ENCODE measurements at regions of chr20 and their contacts with region 1.

Region 1: GRCh38 chr20:47379433-47380150 is 23.1 kb upstream of the ZMYND8 start:
- DNase-seq: no peak
- H3K4me3 ChIP-seq: no peak overlapping the region
- H3K27ac ChIP-seq: peak overlapping the region in 1 of 2 experiments; percentile 69; a peak in 2 of 4 replicates
- H3K4me1 ChIP-seq: peaks cover 3 to 15% of the 10 kb centered on the region in 2 experiments; a peak in 3 of 4 replicates
- H3K27me3 ChIP-seq: no peaks in the 10 kb centered on the region
- CTCF ChIP-seq: no peak
- EP300 ChIP-seq: peak in 1 of 2 experiments; percentile 88; a peak in 2 of 4 replicates
- RAD21 ChIP-seq: no peak

Region 2: DNA sequence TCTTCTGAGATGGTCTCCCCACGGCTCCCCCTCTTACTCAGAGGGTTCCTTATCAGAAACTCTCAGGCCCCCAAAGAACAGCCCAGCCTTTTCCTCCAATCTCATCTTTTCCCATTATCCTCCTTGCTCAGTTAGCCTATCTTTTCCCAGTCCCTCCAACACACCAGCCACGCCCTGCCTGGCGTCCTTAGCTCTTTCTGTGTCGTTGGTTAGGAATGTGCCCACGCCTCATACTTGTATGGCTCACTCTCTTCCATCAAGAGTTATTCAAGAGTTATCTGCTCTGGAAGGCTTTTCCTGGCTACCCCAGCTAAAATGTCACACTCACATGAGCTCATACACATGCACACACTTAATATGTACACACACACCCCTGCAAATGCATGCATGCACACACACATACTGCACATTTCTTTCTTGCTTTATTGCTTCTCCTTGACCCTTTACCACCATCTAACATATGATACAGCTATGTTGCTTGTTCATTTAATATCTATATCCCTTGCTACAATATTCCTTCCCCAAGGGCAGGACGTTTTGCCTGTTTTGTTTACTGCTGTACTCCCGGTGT is 632.6 kb before region 1 on chr20:
- CTCF ChIA-PET with region 1: interaction called, 18 read pairs
- POLR2A ChIA-PET with region 1: no interaction called
- DNase-seq: no peak
- H3K4me3 ChIP-seq: no peak overlapping the region
- H3K27ac ChIP-seq: no peak overlapping the region
- H3K4me1 ChIP-seq: no peaks in the 10 kb centered on the region
- H3K27me3 ChIP-seq: no peaks in the 10 kb centered on the region
- CTCF ChIP-seq: no peak
- EP300 ChIP-seq: no peak
- RAD21 ChIP-seq: no peak

Region 3: GRCh38 chr20:47196091-47197081 is 183.2 kb before region 1 on chr20:
- CTCF ChIA-PET with region 1: interaction called, 323 read pairs
- POLR2A ChIA-PET with region 1: interaction called, 3 read pairs
- DNase-seq: peak; percentile 83
- H3K4me3 ChIP-seq: no peak overlapping the region; a peak in 1 of 4 replicates
- H3K27ac ChIP-seq: no peak overlapping the region
- H3K4me1 ChIP-seq: peaks cover 0 to 2% of the 10 kb centered on the region in 2 experiments; a peak in 1 of 4 replicates
- H3K27me3 ChIP-seq: no peaks in the 10 kb centered on the region
- CTCF ChIP-seq: peak; percentile 94
- EP300 ChIP-seq: no peak
- RAD21 ChIP-seq: peak; percentile 93

Region 4: DNA sequence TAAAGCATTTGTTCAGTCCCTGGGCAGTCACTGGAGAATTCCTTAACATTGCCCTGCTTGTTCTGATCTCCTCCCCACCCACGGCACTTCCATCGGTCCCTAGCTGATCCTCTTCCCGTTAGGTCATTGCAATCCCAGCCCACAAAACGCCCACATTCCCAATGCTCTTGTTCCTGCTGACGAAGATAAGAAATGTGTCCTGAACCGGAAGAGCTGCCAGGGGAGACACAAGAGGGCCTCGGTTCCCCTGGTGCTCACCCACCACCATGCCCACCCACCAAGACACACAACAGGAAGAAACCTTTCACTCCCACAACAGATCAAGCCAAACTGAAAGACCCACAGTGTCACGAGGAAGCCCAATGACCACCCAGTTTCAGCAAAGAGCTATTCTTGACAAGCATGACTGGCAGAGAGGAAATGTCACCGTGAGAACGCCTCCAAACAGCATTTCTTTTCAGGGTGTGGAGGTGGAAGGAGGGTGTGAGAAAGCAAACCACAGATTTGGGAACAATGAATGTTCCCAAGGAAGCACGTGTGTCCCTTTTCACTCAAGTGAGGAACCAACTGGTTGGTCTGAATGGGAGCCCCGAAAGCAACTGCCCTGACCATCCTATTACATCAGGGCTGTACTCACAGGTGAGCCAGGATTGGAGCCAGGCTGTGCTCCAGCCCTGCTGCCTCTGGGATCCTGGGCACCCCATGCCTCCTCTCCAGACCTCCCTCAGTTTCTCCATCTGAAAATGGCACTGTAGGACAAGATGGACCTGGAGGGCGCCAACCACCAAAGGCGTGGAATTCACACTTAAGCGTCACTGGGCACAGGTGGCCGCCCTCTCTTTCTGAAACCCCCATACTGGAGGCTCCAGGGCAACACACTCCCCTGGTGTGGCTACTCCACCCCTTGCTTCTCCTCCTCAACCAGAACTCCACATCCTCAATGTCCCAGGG is 120.6 kb before region 1 on chr20:
- CTCF ChIA-PET with region 1: interaction called, 38 read pairs
- POLR2A ChIA-PET with region 1: no interaction called
- DNase-seq: no peak
- H3K4me3 ChIP-seq: no peak overlapping the region
- H3K27ac ChIP-seq: no peak overlapping the region; a peak in 1 of 4 replicates
- H3K4me1 ChIP-seq: peaks cover 6 to 21% of the 10 kb centered on the region in 2 experiments; a peak in 3 of 4 replicates
- H3K27me3 ChIP-seq: no peaks in the 10 kb centered on the region
- CTCF ChIP-seq: no peak
- EP300 ChIP-seq: no peak
- RAD21 ChIP-seq: no peak

Region 5: DNA sequence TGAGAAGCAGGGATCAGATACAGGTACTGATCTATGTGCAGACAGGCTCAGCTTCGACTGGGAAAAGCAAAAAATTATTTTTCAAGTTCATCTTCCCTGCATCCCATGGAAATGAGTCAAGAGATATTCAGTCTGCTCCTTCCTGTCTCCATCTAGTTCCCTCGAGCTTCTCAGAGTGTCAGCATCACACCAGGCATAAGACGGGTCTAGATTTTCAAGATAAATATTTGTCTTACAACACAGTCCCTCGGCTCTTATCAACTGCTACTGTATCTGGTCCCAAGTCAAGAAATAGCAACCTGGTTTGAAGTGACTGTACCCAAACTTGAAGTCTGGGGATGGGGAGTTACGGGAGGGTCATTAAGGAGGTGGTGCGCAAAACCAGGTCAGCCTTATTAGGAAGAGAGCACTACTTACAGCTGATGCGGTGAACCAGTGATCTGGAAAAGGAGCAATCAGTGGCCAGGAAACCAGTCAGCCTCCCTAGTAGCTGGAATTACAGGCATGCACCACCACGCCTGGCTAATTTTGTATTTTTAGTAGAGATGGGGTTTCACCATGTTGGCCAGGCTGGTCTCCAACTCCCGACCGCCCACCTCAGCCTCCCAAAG is 52.8 kb before region 1 on chr20:
- CTCF ChIA-PET with region 1: interaction called, 22 read pairs
- POLR2A ChIA-PET with region 1: no interaction called
- DNase-seq: no peak
- H3K4me3 ChIP-seq: no peak overlapping the region
- H3K27ac ChIP-seq: peak overlapping the region; percentile 16 to 93; a peak in 3 of 4 replicates
- H3K4me1 ChIP-seq: peaks cover 17 to 22% of the 10 kb centered on the region in 2 experiments; a peak in 3 of 4 replicates
- H3K27me3 ChIP-seq: no peaks in the 10 kb centered on the region
- CTCF ChIP-seq: no peak
- EP300 ChIP-seq: peak in 1 of 2 experiments; percentile 19; a peak in 1 of 4 replicates
- RAD21 ChIP-seq: no peak

Region 6: GRCh38 chr20:47406849-47407666 is 27.5 kb after region 1 on chr20:
- CTCF ChIA-PET with region 1: interaction called, 10 read pairs
- POLR2A ChIA-PET with region 1: no interaction called
- DNase-seq: no peak
- H3K4me3 ChIP-seq: no peak overlapping the region
- H3K27ac ChIP-seq: no peak overlapping the region
- H3K4me1 ChIP-seq: no peaks in the 10 kb centered on the region
- H3K27me3 ChIP-seq: no peaks in the 10 kb centered on the region
- CTCF ChIP-seq: no peak
- EP300 ChIP-seq: no peak
- RAD21 ChIP-seq: no peak

Region 7: GRCh38 chr20:47620808-47621805 is 241.5 kb after region 1 on chr20:
- CTCF ChIA-PET with region 1: interaction called, 71 read pairs
- POLR2A ChIA-PET with region 1: interaction called, 3 read pairs
- DNase-seq: peak; percentile 39
- H3K4me3 ChIP-seq: peak overlapping the region in 1 of 2 experiments; percentile 28; a peak in 1 of 4 replicates
- H3K27ac ChIP-seq: peak overlapping the region in 1 of 2 experiments; percentile 12; a peak in 1 of 4 replicates
- H3K4me1 ChIP-seq: no peaks in the 10 kb centered on the region; a peak in 1 of 4 replicates
- H3K27me3 ChIP-seq: no peaks in the 10 kb centered on the region
- CTCF ChIP-seq: peak; percentile 96
- EP300 ChIP-seq: no peak
- RAD21 ChIP-seq: peak; percentile 90

Measured in SK-N-SH (cell line).